ENCODE measurements at regions of chr1 and their contacts with region 1.

Region 1: DNA sequence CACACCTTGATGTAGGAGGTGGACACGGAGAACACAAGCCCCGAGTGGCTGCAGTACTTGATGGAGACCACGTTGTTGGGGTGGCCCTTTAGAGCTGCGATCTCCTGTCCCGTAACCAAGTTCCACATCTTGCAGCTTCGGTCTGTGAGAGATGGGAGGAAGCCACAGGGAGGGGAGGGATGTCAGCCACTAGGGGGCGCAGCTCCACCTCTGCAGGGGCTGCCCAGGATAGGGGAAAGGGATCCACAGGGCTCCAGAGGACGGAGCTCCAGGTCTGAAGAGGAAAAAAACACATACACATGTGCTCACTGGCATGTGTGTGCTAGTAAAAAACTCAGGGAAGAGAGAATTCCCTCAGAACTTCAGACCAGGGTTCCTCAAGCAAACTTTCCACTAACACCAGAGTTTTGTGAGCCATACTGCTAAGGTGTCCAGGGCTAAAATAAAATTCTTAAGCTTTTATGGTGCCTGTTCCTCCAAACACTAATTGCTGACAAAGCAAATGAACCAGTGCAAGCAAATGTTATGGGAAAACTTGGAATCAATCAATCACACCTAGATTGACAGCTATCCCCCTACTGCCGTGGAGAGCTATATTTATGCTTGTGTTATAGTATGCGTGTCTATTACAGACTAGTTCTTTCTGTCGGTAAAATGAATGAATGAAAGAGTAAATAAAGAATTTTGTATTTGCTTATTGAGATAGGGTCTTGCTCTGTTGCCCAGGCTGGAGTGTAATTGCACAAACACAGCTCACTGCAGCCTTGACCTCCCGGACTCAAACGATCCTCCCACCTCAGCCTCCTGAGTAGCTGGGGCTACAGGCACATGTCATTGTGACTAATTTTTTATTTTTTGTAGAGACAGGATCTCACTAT is 43.7 kb downstream of the KIF21B start:
- DNase-seq: peak; percentile 47 to 95
- H3K4me3 ChIP-seq: no peak overlapping the region
- H3K27ac ChIP-seq: no peak overlapping the region
- H3K4me1 ChIP-seq: no peaks in the 10 kb centered on the region
- H3K27me3 ChIP-seq: no peaks in the 10 kb centered on the region
- CTCF ChIP-seq: peak; percentile 90 to 98 (median 97)
- EP300 ChIP-seq: peak in 1 of 2 experiments; percentile 10; a peak in 1 of 3 replicates
- POLR2A ChIP-seq: no peak
- RAD21 ChIP-seq: peak; percentile 87 to 89

Region 2: DNA sequence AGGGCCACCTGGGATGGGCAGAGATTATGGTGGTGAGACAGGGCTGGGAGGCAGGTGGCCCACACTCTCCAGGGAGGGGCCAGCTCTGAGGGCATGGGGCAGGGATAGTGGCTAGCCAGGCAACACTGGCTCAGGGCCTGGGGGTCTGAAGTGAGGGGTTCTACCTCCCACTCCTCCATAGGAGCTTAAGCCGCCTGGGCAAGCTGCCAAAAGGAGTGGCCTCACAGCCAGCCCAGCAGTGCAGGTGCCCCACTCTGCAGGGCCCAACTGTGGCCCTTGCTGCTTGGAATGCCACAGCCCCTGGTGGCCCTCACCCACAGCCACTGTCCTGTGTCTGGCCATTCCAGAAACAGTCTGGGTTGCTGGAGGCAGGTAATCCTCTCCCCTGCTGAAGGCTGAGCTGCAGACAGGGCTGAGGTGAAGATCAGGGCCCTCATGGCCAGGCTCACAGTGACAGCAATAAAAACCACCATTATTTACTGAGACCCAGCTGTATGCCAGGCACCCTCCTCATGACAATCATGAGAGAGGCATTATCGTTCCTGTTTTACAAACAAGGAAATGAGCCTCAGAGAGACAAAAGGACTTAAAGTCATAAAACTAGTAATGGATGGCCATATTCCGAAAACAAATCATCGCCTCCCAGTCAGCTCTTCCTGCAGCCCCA is 12.7 kb after region 1 on chr1:
- CTCF ChIA-PET with region 1: interaction called, 146 read pairs
- POLR2A ChIA-PET with region 1: interaction called, 5 read pairs
- DNase-seq: no peak
- H3K4me3 ChIP-seq: no peak overlapping the region
- H3K27ac ChIP-seq: no peak overlapping the region
- H3K4me1 ChIP-seq: no peaks in the 10 kb centered on the region
- H3K27me3 ChIP-seq: no peaks in the 10 kb centered on the region
- CTCF ChIP-seq: no peak
- EP300 ChIP-seq: no peak
- POLR2A ChIP-seq: no peak
- RAD21 ChIP-seq: no peak

Region 3: GRCh38 chr1:201009962-201010645 is 30.3 kb after region 1 on chr1:
- CTCF ChIA-PET with region 1: interaction called, 532 read pairs
- POLR2A ChIA-PET with region 1: no interaction called
- DNase-seq: no peak
- H3K4me3 ChIP-seq: no peak overlapping the region
- H3K27ac ChIP-seq: 0 out of 2 replicates have a peak overlapping the region, but pooled peaks have one; percentile 26
- H3K4me1 ChIP-seq: peaks cover 0 to 17% (median 11%) of the 10 kb centered on the region in 4 experiments; a peak in 6 of 7 replicates
- H3K27me3 ChIP-seq: no peaks in the 10 kb centered on the region
- CTCF ChIP-seq: no peak
- EP300 ChIP-seq: no peak
- POLR2A ChIP-seq: no peak
- RAD21 ChIP-seq: no peak

Region 4: GRCh38 chr1:201114236-201115131 is 134.7 kb after region 1 on chr1:
- CTCF ChIA-PET with region 1: interaction called, 17 read pairs
- POLR2A ChIA-PET with region 1: no interaction called
- DNase-seq: peak; percentile 90 to 91
- H3K4me3 ChIP-seq: peak overlapping the region; percentile 30 to 72 (median 50)
- H3K27ac ChIP-seq: no peak overlapping the region
- H3K4me1 ChIP-seq: peaks cover 0 to 5% (median under 1%) of the 10 kb centered on the region in 4 experiments; a peak in 1 of 7 replicates
- H3K27me3 ChIP-seq: peaks cover 9 to 27% (median 21%) of the 10 kb centered on the region in 4 experiments
- CTCF ChIP-seq: peak; percentile 86 to 96 (median 95)
- EP300 ChIP-seq: no peak
- POLR2A ChIP-seq: peak in 1 of 2 experiments; percentile 77; a peak in 2 of 3 replicates
- RAD21 ChIP-seq: peak; percentile 95 to 99

Measured in H1 (cell line).